Left ventricle myocardium inferior (tissue), 1 donor: ENCODE measurements at regions of chr10 and their contacts with region 1.

Region 1: DNA sequence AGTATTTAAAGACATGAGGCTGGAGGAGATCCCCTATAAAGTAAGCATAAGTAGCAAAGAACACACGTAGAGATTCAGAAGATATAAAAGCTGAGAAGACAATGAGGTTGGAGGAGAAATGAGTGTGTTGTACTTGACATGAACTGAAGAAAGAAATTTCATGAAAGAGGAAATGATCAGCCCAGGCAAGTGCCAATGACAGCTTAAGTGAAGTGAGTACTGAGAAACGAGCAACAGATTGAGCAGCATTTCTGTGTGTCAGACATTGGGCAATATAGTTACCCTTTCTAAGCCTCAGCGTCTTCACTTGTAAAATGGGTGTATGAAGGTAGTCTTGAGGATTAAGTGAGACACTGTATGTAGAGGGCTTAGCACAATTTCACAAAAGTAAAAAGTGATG is 4.8 kb upstream of the LIPA start:
- DNase-seq: no peak
- H3K4me3 ChIP-seq: no peak overlapping the region
- H3K27ac ChIP-seq: no peak overlapping the region
- H3K4me1 ChIP-seq: peaks cover 10% of the 10 kb centered on the region
- H3K27me3 ChIP-seq: no peaks in the 10 kb centered on the region
- CTCF ChIP-seq: no peak

Region 2: GRCh38 chr10:89332123-89332633 is 75.8 kb after region 1 on chr10:
- intact Hi-C with region 1: no loop called
- DNase-seq: no peak
- H3K4me3 ChIP-seq: peak overlapping the region; percentile 64
- H3K27ac ChIP-seq: peak overlapping the region; percentile 90
- H3K4me1 ChIP-seq: peaks cover 91% of the 10 kb centered on the region
- H3K27me3 ChIP-seq: no peaks in the 10 kb centered on the region
- CTCF ChIP-seq: no peak

Region 3: GRCh38 chr10:89563861-89564478 is 307.6 kb after region 1 on chr10:
- intact Hi-C with region 1: loop called (anchors 5 kb)
- DNase-seq: no peak
- H3K4me3 ChIP-seq: no peak overlapping the region
- H3K27ac ChIP-seq: no peak overlapping the region
- H3K4me1 ChIP-seq: no peaks in the 10 kb centered on the region
- H3K27me3 ChIP-seq: no peaks in the 10 kb centered on the region
- CTCF ChIP-seq: peak; percentile 81